ENCODE measurements at regions of chr2 and their contacts with region 1.

Region 1: GRCh38 chr2:234288974-234289455 is 207.9 kb downstream of the ARL4C start:
- DNase-seq: peak; percentile 72
- H3K4me3 Mint-ChIP-seq: no peak overlapping the region
- H3K27ac Mint-ChIP-seq: peak overlapping the region; percentile 98
- H3K4me1 Mint-ChIP-seq: peaks cover 81% of the 10 kb centered on the region
- H3K27me3 Mint-ChIP-seq: no peaks in the 10 kb centered on the region

Region 2: DNA sequence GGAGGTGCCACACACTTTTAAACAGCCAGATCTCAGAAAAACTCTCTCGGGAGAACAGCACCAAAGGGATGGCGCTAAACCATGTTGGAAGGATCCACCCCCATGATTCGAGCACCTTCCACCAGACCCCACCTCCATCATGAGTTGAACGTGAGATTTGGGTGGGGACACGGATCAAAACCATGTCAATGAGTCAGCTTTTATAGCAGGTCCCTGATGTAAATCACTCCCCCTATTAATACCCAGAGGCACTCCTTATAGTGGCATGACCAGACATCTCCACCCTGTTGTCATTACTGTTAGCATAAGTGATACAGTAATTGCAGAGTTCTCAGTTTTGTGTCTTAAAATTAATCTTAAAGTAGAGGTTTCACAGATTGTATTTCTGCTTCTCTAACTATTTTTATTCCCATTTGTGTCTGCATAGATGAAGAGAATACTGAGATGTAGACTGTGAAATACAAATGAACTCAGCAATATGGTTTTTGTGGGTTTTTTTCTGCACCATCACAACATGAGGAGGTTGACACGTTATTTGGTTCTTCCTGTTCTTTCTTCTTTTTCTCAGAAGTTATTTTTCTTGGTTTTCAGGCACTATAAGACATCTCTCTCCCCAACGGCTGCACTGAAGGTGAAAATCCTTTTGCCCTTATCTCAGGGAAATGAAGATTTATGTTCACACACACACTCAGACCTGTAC is 10.3 kb before region 1 on chr2:
- CTCF ChIA-PET with region 1: interaction called, 25 read pairs
- POLR2A ChIA-PET with region 1: no interaction called
- DNase-seq: peak; percentile 61
- H3K4me3 Mint-ChIP-seq: peak overlapping the region; percentile 12
- H3K27ac Mint-ChIP-seq: peak overlapping the region; percentile 87
- H3K4me1 Mint-ChIP-seq: peaks cover 81% of the 10 kb centered on the region
- H3K27me3 Mint-ChIP-seq: no peaks in the 10 kb centered on the region

Region 3: GRCh38 chr2:234446404-234447076 is 157.5 kb after region 1 on chr2:
- CTCF ChIA-PET with region 1: interaction called, 3 read pairs
- POLR2A ChIA-PET with region 1: interaction called, 13 read pairs
- DNase-seq: peak; percentile 92
- H3K4me3 Mint-ChIP-seq: peak overlapping the region; percentile 63
- H3K27ac Mint-ChIP-seq: peak overlapping the region; percentile 99
- H3K4me1 Mint-ChIP-seq: peaks cover 92% of the 10 kb centered on the region
- H3K27me3 Mint-ChIP-seq: no peaks in the 10 kb centered on the region

Region 4: GRCh38 chr2:234463626-234464290 is 174.7 kb after region 1 on chr2:
- CTCF ChIA-PET with region 1: interaction called, 12 read pairs
- POLR2A ChIA-PET with region 1: interaction called, 3 read pairs
- DNase-seq: peak; percentile 83
- H3K4me3 Mint-ChIP-seq: peak overlapping the region; percentile 66
- H3K27ac Mint-ChIP-seq: peak overlapping the region; percentile 95
- H3K4me1 Mint-ChIP-seq: peaks cover 66% of the 10 kb centered on the region
- H3K27me3 Mint-ChIP-seq: no peaks in the 10 kb centered on the region

Region 5: GRCh38 chr2:234500394-234501006 is 211.5 kb after region 1 on chr2:
- CTCF ChIA-PET with region 1: interaction called, 59 read pairs
- POLR2A ChIA-PET with region 1: interaction called, 8 read pairs
- DNase-seq: peak; percentile 85
- H3K4me3 Mint-ChIP-seq: peak overlapping the region; percentile 25
- H3K27ac Mint-ChIP-seq: peak overlapping the region; percentile 60
- H3K4me1 Mint-ChIP-seq: peaks cover 32% of the 10 kb centered on the region
- H3K27me3 Mint-ChIP-seq: peaks cover 10% of the 10 kb centered on the region

Region 6: GRCh38 chr2:234564699-234565098 is 275.7 kb after region 1 on chr2:
- CTCF ChIA-PET with region 1: no interaction called
- POLR2A ChIA-PET with region 1: no interaction called
- DNase-seq: no peak
- H3K4me3 Mint-ChIP-seq: no peak overlapping the region
- H3K27ac Mint-ChIP-seq: no peak overlapping the region
- H3K4me1 Mint-ChIP-seq: no peaks in the 10 kb centered on the region
- H3K27me3 Mint-ChIP-seq: peaks cover under 1% of the 10 kb centered on the region

Measured in activated CD4-positive, alpha-beta T cell treated with anti-CD3 and anti-CD28 coated beads, Interleukin-2, amount 10 ng/mL, durations not matched to agents 7 days and 5 days (primary cell).